Activated CD4-positive, alpha-beta memory T cell treated with anti-CD3 and anti-CD28 coated beads for 36 hours (primary cell): ENCODE measurements at regions of chr11 and their contacts with region 1.

Region 1: GRCh38 chr11:18650859-18651557 is 16.9 kb upstream of the SPTY2D1 start:
- DNase-seq: peak; percentile 58
- H3K4me3 Mint-ChIP-seq: peak overlapping the region; percentile 17
- H3K27ac Mint-ChIP-seq: no peak overlapping the region
- H3K4me1 Mint-ChIP-seq: peaks cover 4% of the 10 kb centered on the region
- H3K27me3 Mint-ChIP-seq: no peaks in the 10 kb centered on the region

Region 2: DNA sequence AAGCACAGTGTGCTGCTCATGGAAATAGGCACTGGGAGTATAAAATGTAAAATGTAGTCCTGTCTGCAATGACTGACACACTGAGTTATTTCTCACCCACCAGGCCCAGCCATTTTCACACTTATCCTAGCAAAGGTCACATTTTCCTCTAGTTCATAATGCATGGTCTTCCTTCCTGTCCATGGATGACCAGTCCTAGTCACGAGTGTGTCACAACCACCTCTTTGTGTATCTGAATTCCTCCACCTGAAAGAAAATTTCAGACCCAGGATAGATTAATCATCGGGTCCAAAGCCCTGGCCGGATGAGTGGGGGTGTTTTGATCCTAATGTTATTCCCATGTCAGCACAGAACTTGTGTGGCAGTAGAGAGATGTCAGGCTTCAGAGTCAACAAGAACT is 478.3 kb before region 1 on chr11 and contains the start of gene MRGPRX4:
- CTCF ChIA-PET with region 1: no interaction called
- POLR2A ChIA-PET with region 1: no interaction called
- intact Hi-C with region 1: no loop called
- DNase-seq: no peak
- H3K4me3 Mint-ChIP-seq: no peak within 1 kb of the TSS
- H3K27ac Mint-ChIP-seq: no peak within 1 kb of the TSS
- H3K4me1 Mint-ChIP-seq: no peaks in the 10 kb centered on the region
- H3K27me3 Mint-ChIP-seq: peaks cover 22% of the 10 kb centered on the region
- total RNA-seq, gene MRGPRX4: not detected

Region 3: GRCh38 chr11:18540207-18541009 is 110.6 kb before region 1 on chr11:
- CTCF ChIA-PET with region 1: interaction called, 40 read pairs
- POLR2A ChIA-PET with region 1: no interaction called
- intact Hi-C with region 1: loop called (anchors 1 kb)
- DNase-seq: no peak
- H3K4me3 Mint-ChIP-seq: no peak overlapping the region
- H3K27ac Mint-ChIP-seq: no peak overlapping the region
- H3K4me1 Mint-ChIP-seq: peaks cover 5% of the 10 kb centered on the region
- H3K27me3 Mint-ChIP-seq: no peaks in the 10 kb centered on the region

Region 4: DNA sequence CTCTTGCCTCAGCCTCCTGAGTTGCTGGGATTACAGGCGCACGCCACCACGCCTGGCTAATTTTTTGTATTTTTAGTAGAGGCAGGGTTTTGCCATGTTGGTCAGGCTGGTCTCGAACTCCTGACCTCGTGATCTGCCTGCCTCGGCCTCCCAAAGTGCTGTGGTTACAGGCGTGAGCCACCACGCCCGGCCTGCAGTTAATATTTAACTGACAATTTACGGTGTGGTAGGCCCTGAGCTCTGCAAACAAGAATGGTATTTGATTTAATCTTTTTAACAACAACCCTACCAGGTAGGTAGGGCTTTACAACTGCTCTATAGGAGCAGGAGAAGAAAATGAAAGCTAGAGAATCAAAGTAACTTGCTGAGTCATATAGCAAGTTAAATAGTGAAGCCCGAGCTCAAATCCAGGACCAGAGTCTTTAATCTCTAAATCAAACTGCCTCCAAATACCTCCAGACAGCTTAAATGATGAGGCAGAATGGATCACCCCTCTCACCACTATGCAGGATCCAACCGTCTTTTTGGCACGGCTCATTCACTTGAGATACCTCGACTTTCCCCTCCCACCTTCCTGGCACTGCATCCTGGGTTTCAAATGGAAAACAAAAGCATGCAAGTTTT is 71.9 kb before region 1 on chr11:
- CTCF ChIA-PET with region 1: no interaction called
- POLR2A ChIA-PET with region 1: no interaction called
- intact Hi-C with region 1: loop called (anchors 1 kb)
- DNase-seq: peak; percentile 39
- H3K4me3 Mint-ChIP-seq: peak overlapping the region; percentile 57
- H3K27ac Mint-ChIP-seq: peak overlapping the region; percentile 70
- H3K4me1 Mint-ChIP-seq: peaks cover 21% of the 10 kb centered on the region
- H3K27me3 Mint-ChIP-seq: no peaks in the 10 kb centered on the region

Region 5: GRCh38 chr11:18588297-18589252 is 62.4 kb before region 1 on chr11 and contains the start of gene UEVLD:
- CTCF ChIA-PET with region 1: interaction called, 4 read pairs
- POLR2A ChIA-PET with region 1: no interaction called
- intact Hi-C with region 1: loop called (anchors 1 kb)
- DNase-seq: peak; percentile 81
- H3K4me3 Mint-ChIP-seq: no peak within 1 kb of the TSS
- H3K27ac Mint-ChIP-seq: no peak within 1 kb of the TSS
- H3K4me1 Mint-ChIP-seq: peaks cover 10% of the 10 kb centered on the region
- H3K27me3 Mint-ChIP-seq: no peaks in the 10 kb centered on the region
- total RNA-seq, gene UEVLD: 20.9 to 26.2 TPM

Region 6: GRCh38 chr11:18692941-18693760 is 42.1 kb after region 1 on chr11:
- CTCF ChIA-PET with region 1: no interaction called
- POLR2A ChIA-PET with region 1: no interaction called
- intact Hi-C with region 1: no loop called
- DNase-seq: no peak
- H3K4me3 Mint-ChIP-seq: no peak overlapping the region
- H3K27ac Mint-ChIP-seq: no peak overlapping the region
- H3K4me1 Mint-ChIP-seq: peaks cover 6% of the 10 kb centered on the region
- H3K27me3 Mint-ChIP-seq: no peaks in the 10 kb centered on the region